ENCODE measurements at regions of chr1 and their contacts with region 1.

Region 1: GRCh38 chr1:161201828-161202725 is at the start of gene NDUFS2:
- DNase-seq: peak; percentile 97
- ATAC-seq: peak; percentile 98
- H3K4me3 ChIP-seq: peak within 1 kb of the TSS; percentile 77 to 99 (median 88)
- H3K4me3 Mint-ChIP-seq: peak within 1 kb of the TSS; percentile 96
- H3K27ac ChIP-seq: peak within 1 kb of the TSS; percentile 81 to 88
- H3K27ac Mint-ChIP-seq: peak within 1 kb of the TSS; percentile 97
- H3K4me1 ChIP-seq: peaks cover 16 to 26% of the 10 kb centered on the region in 2 donors
- H3K4me1 Mint-ChIP-seq: peaks cover 36% of the 10 kb centered on the region
- H3K27me3 ChIP-seq: no peaks in the 10 kb centered on the region
- H3K27me3 Mint-ChIP-seq: no peaks in the 10 kb centered on the region
- CTCF ChIP-seq: no peak
- total RNA-seq, gene NDUFS2: 80.2 and 82.3 TPM in 2 replicates

Region 2: DNA sequence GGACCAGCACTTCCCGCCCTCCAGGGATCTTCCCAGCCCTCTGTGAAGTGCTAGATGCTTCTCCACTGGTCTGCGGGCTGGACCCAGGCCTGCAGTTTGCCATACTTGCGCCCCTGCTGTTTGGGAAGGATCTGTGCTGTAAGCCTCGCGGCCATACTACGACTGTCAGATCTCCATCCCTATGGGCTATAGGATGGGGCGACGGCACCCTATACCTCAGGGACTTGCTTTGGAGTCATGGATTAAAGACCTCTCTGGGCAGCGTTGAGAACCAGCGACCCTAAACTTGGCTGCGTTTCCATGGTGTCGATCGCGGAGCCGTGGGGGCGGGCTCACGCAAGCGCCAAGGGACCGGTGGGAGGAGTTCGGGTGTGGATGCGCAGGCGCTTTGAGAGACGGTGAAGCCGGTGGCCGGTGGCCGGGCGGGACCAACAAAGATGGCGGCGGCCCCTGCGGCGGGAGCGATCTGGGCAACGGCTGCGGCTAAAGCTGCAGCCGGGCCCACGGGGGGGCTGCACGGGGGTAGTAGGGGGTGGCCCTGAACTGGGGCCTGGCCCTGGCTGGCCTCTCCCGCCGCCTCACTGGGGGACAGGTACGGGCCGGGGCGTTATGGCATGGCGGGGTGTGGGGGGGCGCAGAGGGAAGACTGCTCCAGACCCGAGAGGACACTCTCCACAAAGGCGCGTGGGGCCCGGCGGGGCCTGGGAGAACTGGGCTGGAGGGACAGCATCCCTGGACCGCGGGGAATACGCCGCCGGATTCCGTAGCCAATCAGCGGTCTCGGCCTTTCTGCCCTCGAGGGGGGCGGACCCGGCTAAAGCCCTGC is 42.8 kb before region 1 on chr1 and contains the start of gene USP21:
- CTCF ChIA-PET with region 1: interaction called, 5 read pairs
- POLR2A ChIA-PET with region 1: no interaction called
- intact Hi-C with region 1: loop called (anchors 1 kb)
- DNase-seq: peak; percentile 94
- ATAC-seq: peak; percentile 96
- H3K4me3 ChIP-seq: peak within 1 kb of the TSS; percentile 69 to 92 (median 85)
- H3K4me3 Mint-ChIP-seq: peak within 1 kb of the TSS; percentile 92
- H3K27ac ChIP-seq: peak within 1 kb of the TSS; percentile 74 to 76
- H3K27ac Mint-ChIP-seq: peak within 1 kb of the TSS; percentile 93
- H3K4me1 ChIP-seq: peaks cover 31 to 33% of the 10 kb centered on the region in 2 donors
- H3K4me1 Mint-ChIP-seq: peaks cover 55% of the 10 kb centered on the region
- H3K27me3 ChIP-seq: no peaks in the 10 kb centered on the region
- H3K27me3 Mint-ChIP-seq: no peaks in the 10 kb centered on the region
- CTCF ChIP-seq: no peak
- total RNA-seq, gene USP21: 50.2 and 53.3 TPM in 2 replicates

Region 3: DNA sequence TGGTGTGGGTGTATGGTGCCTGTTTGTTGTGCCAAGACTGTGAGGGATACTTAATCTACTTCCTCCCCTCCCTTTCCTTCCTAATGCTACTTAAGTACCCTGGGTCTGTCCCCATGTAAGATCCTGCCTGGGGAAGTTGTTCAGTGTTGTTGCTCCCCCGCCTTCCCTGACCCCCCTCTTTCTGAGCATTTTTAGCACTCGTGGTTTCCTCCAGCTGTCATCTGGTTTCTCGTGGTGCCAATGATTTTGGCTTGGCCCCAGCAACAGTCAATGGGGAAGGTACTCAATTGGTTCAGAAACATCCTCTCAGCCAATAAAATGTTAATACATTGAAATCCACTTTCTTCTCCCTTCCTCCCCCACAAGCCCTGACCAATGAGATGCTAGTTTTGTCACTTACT is 16.8 kb before region 1 on chr1:
- CTCF ChIA-PET with region 1: interaction called, 18 read pairs
- POLR2A ChIA-PET with region 1: interaction called, 9 read pairs
- intact Hi-C with region 1: loop called (anchors 2 kb)
- DNase-seq: peak; percentile 91
- ATAC-seq: peak; percentile 76
- H3K4me3 ChIP-seq: peak overlapping the region in 4 of 5 experiments; percentile 31 to 63 (median 36)
- H3K4me3 Mint-ChIP-seq: peak overlapping the region; percentile 71
- H3K27ac ChIP-seq: peak overlapping the region; percentile 86 to 94
- H3K27ac Mint-ChIP-seq: peak overlapping the region; percentile 93
- H3K4me1 ChIP-seq: peaks cover 73 to 93% of the 10 kb centered on the region in 2 donors
- H3K4me1 Mint-ChIP-seq: peaks cover 78% of the 10 kb centered on the region
- H3K27me3 ChIP-seq: no peaks in the 10 kb centered on the region
- H3K27me3 Mint-ChIP-seq: no peaks in the 10 kb centered on the region
- CTCF ChIP-seq: no peak

Region 4: DNA sequence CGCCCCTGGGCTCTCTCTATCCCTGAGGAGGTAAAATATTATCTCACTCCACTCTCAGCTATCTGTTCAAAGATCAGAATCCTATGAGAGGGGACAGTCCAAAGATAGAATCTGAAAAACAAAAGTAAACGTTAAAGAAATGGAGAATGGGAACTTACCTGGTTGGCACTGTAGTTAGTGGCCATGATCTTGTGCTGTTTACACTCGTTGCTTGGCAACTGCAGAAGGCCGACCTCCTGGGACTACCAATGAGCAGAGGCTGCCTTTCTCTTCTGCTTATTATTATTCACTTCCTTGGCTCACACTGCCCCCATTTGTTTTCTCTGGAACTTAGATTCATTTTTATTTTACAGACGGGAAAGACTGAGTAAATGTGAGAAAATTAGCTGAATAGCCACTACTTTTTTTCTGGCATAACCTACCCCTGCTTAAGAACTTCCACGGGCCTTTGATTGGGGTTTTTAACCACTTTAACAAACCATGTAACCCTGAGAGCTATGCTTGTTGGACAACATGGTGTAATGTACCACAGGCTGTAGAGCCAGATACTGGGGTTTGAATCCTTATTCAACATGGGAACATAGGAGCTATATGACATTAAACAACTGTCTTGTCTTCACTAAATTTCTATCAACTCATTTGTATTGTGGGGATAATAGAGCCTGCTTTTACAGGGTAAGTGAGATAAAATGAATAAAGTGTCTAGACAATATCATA is 165.8 kb after region 1 on chr1 and contains the start of gene CFAP126:
- CTCF ChIA-PET with region 1: interaction called, 3 read pairs
- POLR2A ChIA-PET with region 1: no interaction called
- intact Hi-C with region 1: loop called (anchors 5 kb)
- DNase-seq: peak; percentile 91
- ATAC-seq: peak; percentile 100
- H3K4me3 ChIP-seq: no peak within 1 kb of the TSS
- H3K4me3 Mint-ChIP-seq: no peak within 1 kb of the TSS
- H3K27ac ChIP-seq: peak within 1 kb of the TSS; percentile 69 to 91
- H3K27ac Mint-ChIP-seq: peak within 1 kb of the TSS; percentile 32
- H3K4me1 ChIP-seq: peaks cover 7 to 9% of the 10 kb centered on the region in 2 donors
- H3K4me1 Mint-ChIP-seq: peaks cover 8% of the 10 kb centered on the region
- H3K27me3 ChIP-seq: no peaks in the 10 kb centered on the region
- H3K27me3 Mint-ChIP-seq: no peaks in the 10 kb centered on the region
- CTCF ChIP-seq: peak; percentile 48
- total RNA-seq, gene CFAP126: not detected in 2 replicates

Measured in B cell (primary cell).